Endothelial cell of umbilical vein (primary cell): ENCODE measurements at regions of chr6 and their contacts with region 1.

Region 1: GRCh38 chr6:155013457-155013876 is 18.4 kb downstream of the TIAM2 start:
- DNase-seq: peak; percentile 89
- H3K4me3 ChIP-seq: peak overlapping the region in 2 of 3 experiments; percentile 39 to 65
- H3K27ac ChIP-seq: peak overlapping the region; percentile 41
- H3K4me1 ChIP-seq: peaks cover 25% of the 10 kb centered on the region
- H3K27me3 ChIP-seq: no peaks in the 10 kb centered on the region
- CTCF ChIP-seq: no peak
- POLR2A ChIP-seq: no peak

Region 2: GRCh38 chr6:154986787-154987235 is 26.7 kb before region 1 on chr6:
- CTCF ChIA-PET with region 1: no interaction called
- POLR2A ChIA-PET with region 1: no interaction called
- dilution Hi-C with region 1: no loop called
- intact Hi-C with region 1: no loop called
- DNase-seq: peak; percentile 57
- H3K4me3 ChIP-seq: no peak overlapping the region
- H3K27ac ChIP-seq: no peak overlapping the region
- H3K4me1 ChIP-seq: no peaks in the 10 kb centered on the region
- H3K27me3 ChIP-seq: peaks cover 0 to 2% of the 10 kb centered on the region in 2 experiments
- CTCF ChIP-seq: no peak
- POLR2A ChIP-seq: no peak

Region 3: GRCh38 chr6:155026022-155026726 is 12.7 kb after region 1 on chr6:
- CTCF ChIA-PET with region 1: interaction called, 3 read pairs
- POLR2A ChIA-PET with region 1: no interaction called
- dilution Hi-C with region 1: no loop called
- intact Hi-C with region 1: loop called (anchors 1 kb)
- DNase-seq: peak; percentile 61
- H3K4me3 ChIP-seq: no peak overlapping the region
- H3K27ac ChIP-seq: no peak overlapping the region
- H3K4me1 ChIP-seq: peaks cover 12% of the 10 kb centered on the region
- H3K27me3 ChIP-seq: no peaks in the 10 kb centered on the region
- CTCF ChIP-seq: no peak
- POLR2A ChIP-seq: no peak